H1 (cell line): ENCODE measurements at regions of chr10 and their contacts with region 1.

Region 1: DNA sequence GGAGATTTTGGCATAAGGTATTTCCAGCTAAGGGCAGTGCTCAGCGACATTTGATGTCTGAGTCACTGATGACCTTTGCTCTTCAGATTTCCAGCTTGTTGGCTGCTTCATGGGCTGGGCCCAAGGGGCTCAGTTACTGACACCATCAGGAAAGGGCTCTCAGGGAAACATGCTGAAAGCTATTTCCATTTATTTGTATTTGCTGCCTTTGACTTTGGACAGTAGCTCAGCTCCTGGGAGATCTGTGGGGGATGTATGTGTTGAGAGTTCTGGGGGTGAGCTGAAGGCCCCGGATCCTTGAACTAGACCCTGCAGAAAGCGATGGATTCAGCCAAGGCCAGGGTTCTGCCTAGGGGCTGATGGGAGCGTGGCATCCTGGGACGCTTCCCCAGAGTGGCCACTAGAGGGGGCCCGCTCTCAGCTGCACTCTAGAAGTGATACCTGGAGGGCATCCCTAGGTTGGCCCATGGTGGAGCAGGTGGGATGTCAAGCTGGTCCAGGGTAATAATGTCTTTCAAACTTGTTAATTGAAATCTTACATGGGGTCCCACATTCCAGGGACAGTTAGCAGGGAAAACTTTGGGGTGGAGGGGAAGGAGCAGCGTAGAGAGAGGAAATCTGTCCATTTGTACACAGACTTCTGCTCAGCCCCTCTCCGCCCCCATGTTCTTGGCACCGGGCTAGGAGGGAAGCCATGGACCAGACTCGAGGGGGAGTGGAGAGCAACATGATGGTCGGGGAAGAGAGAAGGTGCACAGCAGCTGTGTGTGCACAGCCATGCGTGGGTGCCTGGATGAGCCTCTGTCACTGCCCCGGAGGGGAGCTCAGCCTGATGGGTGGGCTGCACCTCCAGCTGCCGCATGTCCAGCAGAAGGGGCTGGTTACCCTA is 3.0 kb upstream of the BTBD16 start:
- DNase-seq: peak in 1 of 2 experiments; percentile 88
- H3K4me3 ChIP-seq: no peak overlapping the region
- H3K27ac ChIP-seq: no peak overlapping the region
- H3K4me1 ChIP-seq: peaks cover 0 to 2% (median 0%) of the 10 kb centered on the region in 4 experiments; a peak in 2 of 7 replicates
- H3K27me3 ChIP-seq: no peaks in the 10 kb centered on the region
- CTCF ChIP-seq: peak; percentile 88 to 95 (median 94)
- EP300 ChIP-seq: no peak
- POLR2A ChIP-seq: no peak
- RAD21 ChIP-seq: peak; percentile 63 to 76

Region 2: DNA sequence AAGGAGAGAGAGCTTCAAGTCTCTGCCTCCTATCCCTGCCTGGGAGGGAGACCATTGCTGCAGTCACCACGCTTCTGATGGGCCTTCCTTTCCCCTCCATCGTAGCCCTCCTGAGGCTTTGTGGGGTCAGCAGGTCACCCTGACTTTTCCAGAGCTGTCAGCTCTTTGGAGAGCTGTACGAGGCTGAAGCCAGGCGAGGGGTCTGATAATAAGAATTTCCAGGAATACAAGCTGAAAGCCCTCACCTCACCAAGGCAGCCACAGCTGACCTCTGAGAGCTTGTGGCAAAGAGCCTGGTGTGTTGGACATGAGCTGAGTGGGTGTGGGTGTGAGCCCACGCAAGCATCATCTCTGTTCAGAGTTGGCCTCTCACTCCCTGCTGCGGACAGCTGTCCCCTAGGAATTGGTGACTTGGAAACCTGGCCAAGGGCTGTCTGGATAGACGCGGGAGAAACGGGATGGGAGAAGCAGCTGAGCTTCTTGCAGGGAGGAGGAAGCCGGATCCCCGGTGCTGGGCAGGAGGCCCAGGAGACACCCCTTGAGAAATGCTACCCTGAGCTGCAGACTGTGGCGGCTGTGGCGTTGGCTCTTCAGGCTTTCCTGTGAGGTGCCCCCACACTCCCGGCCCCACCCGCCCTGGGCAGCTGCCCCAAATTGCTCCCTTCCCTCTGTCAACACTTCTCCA is 119.1 kb before region 1 on chr10:
- CTCF ChIA-PET with region 1: no interaction called
- POLR2A ChIA-PET with region 1: no interaction called
- DNase-seq: no peak
- H3K4me3 ChIP-seq: no peak overlapping the region
- H3K27ac ChIP-seq: no peak overlapping the region
- H3K4me1 ChIP-seq: peaks cover 0 to 16% (median 0%) of the 10 kb centered on the region in 4 experiments; a peak in 2 of 7 replicates
- H3K27me3 ChIP-seq: no peaks in the 10 kb centered on the region
- CTCF ChIP-seq: no peak
- EP300 ChIP-seq: no peak
- POLR2A ChIP-seq: no peak
- RAD21 ChIP-seq: no peak

Region 3: GRCh38 chr10:122191936-122192541 is 76.1 kb before region 1 on chr10:
- CTCF ChIA-PET with region 1: interaction called, 11 read pairs
- POLR2A ChIA-PET with region 1: no interaction called
- DNase-seq: no peak
- H3K4me3 ChIP-seq: no peak overlapping the region
- H3K27ac ChIP-seq: 0 out of 2 replicates have a peak overlapping the region, but pooled peaks have one; percentile 16
- H3K4me1 ChIP-seq: peaks cover 9 to 15% (median 12%) of the 10 kb centered on the region in 4 experiments
- H3K27me3 ChIP-seq: no peaks in the 10 kb centered on the region
- CTCF ChIP-seq: no peak
- EP300 ChIP-seq: no peak
- POLR2A ChIP-seq: no peak
- RAD21 ChIP-seq: no peak

Region 4: GRCh38 chr10:122207596-122207995 is 60.5 kb before region 1 on chr10:
- CTCF ChIA-PET with region 1: no interaction called
- POLR2A ChIA-PET with region 1: no interaction called
- DNase-seq: no peak
- H3K4me3 ChIP-seq: no peak overlapping the region
- H3K27ac ChIP-seq: no peak overlapping the region
- H3K4me1 ChIP-seq: no peaks in the 10 kb centered on the region; a peak in 2 of 7 replicates
- H3K27me3 ChIP-seq: no peaks in the 10 kb centered on the region
- CTCF ChIP-seq: no peak
- EP300 ChIP-seq: no peak
- POLR2A ChIP-seq: no peak
- RAD21 ChIP-seq: no peak

Region 5: DNA sequence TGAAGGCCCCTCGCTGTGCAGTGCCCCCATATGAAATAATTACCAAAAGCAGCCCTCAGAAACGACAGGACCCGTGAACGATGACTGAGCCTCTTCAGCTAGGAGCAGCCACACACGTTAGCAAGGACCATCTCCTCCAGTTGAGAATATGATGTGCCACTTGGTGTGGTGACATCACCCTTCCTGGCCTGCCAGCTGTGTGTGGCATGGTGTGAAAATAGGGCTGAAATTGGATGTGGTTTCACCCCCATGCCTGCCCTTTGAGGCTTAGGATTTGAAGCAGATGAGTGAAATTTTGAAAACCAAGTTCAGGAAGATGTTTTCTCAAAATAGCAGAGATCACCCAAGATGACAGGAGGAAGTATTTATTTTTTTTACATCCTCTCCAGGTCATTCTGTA is 46.1 kb before region 1 on chr10:
- CTCF ChIA-PET with region 1: interaction called, 11 read pairs
- POLR2A ChIA-PET with region 1: no interaction called
- DNase-seq: no peak
- H3K4me3 ChIP-seq: no peak overlapping the region
- H3K27ac ChIP-seq: no peak overlapping the region
- H3K4me1 ChIP-seq: no peaks in the 10 kb centered on the region
- H3K27me3 ChIP-seq: no peaks in the 10 kb centered on the region
- CTCF ChIP-seq: no peak
- EP300 ChIP-seq: no peak
- POLR2A ChIP-seq: no peak
- RAD21 ChIP-seq: no peak

Region 6: DNA sequence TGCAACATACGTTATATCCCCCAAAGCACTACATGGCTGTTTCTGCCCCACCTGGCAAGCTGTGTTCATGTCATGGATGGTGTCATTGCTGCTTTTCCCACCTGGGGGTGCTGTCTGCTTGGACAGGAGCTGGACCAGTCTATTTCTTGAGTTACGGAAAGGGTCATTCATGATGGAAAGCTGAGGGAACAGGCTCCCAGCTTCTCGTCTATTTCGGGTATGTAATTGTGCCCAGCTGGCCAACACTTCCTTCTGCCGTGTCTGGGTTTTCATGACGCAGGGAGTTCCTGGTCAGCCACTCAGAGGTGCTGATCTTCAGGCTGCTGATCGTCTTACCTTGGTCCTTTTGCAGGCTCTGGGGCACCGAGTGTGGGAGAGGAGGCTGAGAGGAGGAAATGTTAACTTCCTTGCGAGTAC is 11.6 kb after region 1 on chr10:
- CTCF ChIA-PET with region 1: interaction called, 58 read pairs
- POLR2A ChIA-PET with region 1: interaction called, 4 read pairs
- DNase-seq: peak in 1 of 2 experiments; percentile 86
- H3K4me3 ChIP-seq: no peak overlapping the region
- H3K27ac ChIP-seq: no peak overlapping the region
- H3K4me1 ChIP-seq: peaks cover 0 to 6% (median 2%) of the 10 kb centered on the region in 4 experiments; a peak in 2 of 7 replicates
- H3K27me3 ChIP-seq: no peaks in the 10 kb centered on the region
- CTCF ChIP-seq: peak; percentile 87 to 93 (median 89)
- EP300 ChIP-seq: no peak
- POLR2A ChIP-seq: no peak
- RAD21 ChIP-seq: peak; percentile 93 to 97

Region 7: GRCh38 chr10:122286867-122287266 is 18.8 kb after region 1 on chr10:
- CTCF ChIA-PET with region 1: interaction called, 33 read pairs
- POLR2A ChIA-PET with region 1: no interaction called
- DNase-seq: no peak
- H3K4me3 ChIP-seq: no peak overlapping the region
- H3K27ac ChIP-seq: no peak overlapping the region
- H3K4me1 ChIP-seq: peaks cover 1 to 6% (median 4%) of the 10 kb centered on the region in 4 experiments; a peak in 4 of 7 replicates
- H3K27me3 ChIP-seq: peaks cover 0 to 4% (median 0%) of the 10 kb centered on the region in 4 experiments; a peak in 2 of 7 replicates
- CTCF ChIP-seq: no peak
- EP300 ChIP-seq: no peak
- POLR2A ChIP-seq: no peak
- RAD21 ChIP-seq: no peak

Region 8: GRCh38 chr10:122298598-122299301 is 30.7 kb after region 1 on chr10:
- CTCF ChIA-PET with region 1: interaction called, 10 read pairs
- POLR2A ChIA-PET with region 1: no interaction called
- DNase-seq: peak; percentile 70 to 82
- H3K4me3 ChIP-seq: no peak overlapping the region
- H3K27ac ChIP-seq: no peak overlapping the region
- H3K4me1 ChIP-seq: peaks cover 0 to 3% (median 2%) of the 10 kb centered on the region in 4 experiments; a peak in 6 of 7 replicates
- H3K27me3 ChIP-seq: no peaks in the 10 kb centered on the region
- CTCF ChIP-seq: peak; percentile 81 to 90 (median 89)
- EP300 ChIP-seq: no peak
- POLR2A ChIP-seq: no peak
- RAD21 ChIP-seq: peak; percentile 96 to 98

Region 9: GRCh38 chr10:122435212-122435827 is 167.2 kb after region 1 on chr10:
- CTCF ChIA-PET with region 1: interaction called, 10 read pairs
- POLR2A ChIA-PET with region 1: interaction called, 3 read pairs
- DNase-seq: no peak
- H3K4me3 ChIP-seq: no peak overlapping the region
- H3K27ac ChIP-seq: no peak overlapping the region
- H3K4me1 ChIP-seq: no peaks in the 10 kb centered on the region
- H3K27me3 ChIP-seq: no peaks in the 10 kb centered on the region
- CTCF ChIP-seq: peak in 2 of 3 experiments; percentile 41; a peak in 2 of 4 replicates
- EP300 ChIP-seq: no peak
- POLR2A ChIP-seq: no peak
- RAD21 ChIP-seq: peak; percentile 63 to 73